ENCODE measurements at regions of chr13 and their contacts with region 1.

Region 1: GRCh38 chr13:24020375-24020830 is 123.1 kb upstream of the C1QTNF9B start:
- DNase-seq: peak; percentile 67
- H3K4me3 ChIP-seq: no peak overlapping the region
- H3K27ac ChIP-seq: no peak overlapping the region
- H3K4me1 ChIP-seq: no peaks in the 10 kb centered on the region
- H3K27me3 ChIP-seq: no peaks in the 10 kb centered on the region
- CTCF ChIP-seq: peak; percentile 62 to 74
- POLR2A ChIP-seq: no peak

Region 2: GRCh38 chr13:24008679-24009078 is 11.7 kb before region 1 on chr13:
- CTCF ChIA-PET with region 1: interaction called, 23 read pairs
- POLR2A ChIA-PET with region 1: no interaction called
- dilution Hi-C with region 1: no loop called
- intact Hi-C with region 1: no loop called
- DNase-seq: no peak
- H3K4me3 ChIP-seq: no peak overlapping the region
- H3K27ac ChIP-seq: no peak overlapping the region
- H3K4me1 ChIP-seq: no peaks in the 10 kb centered on the region
- H3K27me3 ChIP-seq: peaks cover 5 to 9% of the 10 kb centered on the region in 2 experiments
- CTCF ChIP-seq: no peak
- POLR2A ChIP-seq: no peak

Region 3: DNA sequence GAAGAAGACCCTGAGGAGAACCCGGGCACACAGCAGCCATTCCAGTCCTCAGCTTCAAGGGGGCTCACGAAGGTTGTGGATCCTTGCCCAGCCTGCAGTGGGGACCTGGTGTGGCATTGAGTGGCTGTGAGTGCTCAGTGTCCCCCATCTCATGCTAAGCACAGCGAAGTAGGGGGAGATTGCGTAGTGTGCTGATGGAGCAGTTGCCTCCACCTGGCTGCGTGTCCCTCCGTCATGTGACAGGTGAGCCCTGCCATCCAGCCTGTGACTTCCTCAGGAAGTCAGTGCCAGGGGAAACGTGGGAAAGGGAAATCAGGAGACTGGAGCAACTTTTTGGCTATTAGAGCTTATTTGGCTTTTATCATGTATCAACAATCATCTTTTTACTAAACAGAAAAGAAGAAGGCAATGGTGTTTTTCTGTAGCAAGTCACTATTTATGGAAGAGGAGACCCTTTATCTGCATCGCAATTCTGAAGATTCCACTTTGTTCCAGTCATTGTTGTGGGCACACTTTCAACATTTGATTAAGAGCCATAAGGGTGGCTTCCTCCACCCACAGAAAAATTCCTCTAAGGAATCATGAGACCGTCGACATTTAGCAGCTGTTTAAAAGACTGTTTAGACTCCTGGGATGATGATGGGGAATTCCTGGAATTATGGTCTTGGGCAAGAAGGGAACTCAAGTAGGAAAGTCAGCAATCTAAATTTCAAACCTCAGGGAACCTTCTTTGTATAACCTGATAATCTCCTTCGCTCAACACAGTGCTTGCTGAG is 13.3 kb after region 1 on chr13:
- CTCF ChIA-PET with region 1: interaction called, 21 read pairs
- POLR2A ChIA-PET with region 1: no interaction called
- dilution Hi-C with region 1: no loop called
- intact Hi-C with region 1: no loop called
- DNase-seq: no peak
- H3K4me3 ChIP-seq: no peak overlapping the region
- H3K27ac ChIP-seq: no peak overlapping the region
- H3K4me1 ChIP-seq: no peaks in the 10 kb centered on the region
- H3K27me3 ChIP-seq: peaks cover 11 to 14% of the 10 kb centered on the region in 2 experiments
- CTCF ChIP-seq: no peak
- POLR2A ChIP-seq: no peak

Region 4: DNA sequence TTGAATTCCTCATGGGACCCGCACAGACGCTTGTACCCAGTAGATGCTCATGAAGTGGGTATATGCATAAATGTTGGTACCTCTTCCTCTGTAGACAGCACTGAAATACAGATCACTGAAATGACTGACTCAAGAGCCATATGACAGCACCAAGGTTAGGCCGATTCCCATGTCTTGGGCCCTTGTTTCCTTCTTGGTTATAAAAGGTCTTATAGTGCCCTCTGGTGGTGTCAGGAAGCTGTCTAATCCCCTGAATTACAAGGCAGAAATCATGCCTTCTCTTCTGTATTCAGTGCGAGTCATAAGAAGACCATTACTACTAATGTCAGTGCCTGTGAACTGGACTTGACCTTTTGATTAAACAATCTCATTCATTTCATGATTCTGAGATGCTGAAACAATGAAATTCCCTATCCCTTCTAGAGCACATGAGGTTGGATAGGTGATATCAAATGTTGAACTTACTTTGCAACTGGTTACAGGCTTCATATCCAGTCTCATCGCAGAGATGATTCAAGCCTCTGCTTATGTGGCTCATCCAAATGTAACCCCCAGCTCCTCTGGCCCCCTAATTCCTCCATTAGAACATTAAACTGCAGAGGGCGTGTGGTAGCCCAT is 199.8 kb after region 1 on chr13:
- CTCF ChIA-PET with region 1: interaction called, 118 read pairs
- POLR2A ChIA-PET with region 1: no interaction called
- dilution Hi-C with region 1: no loop called
- intact Hi-C with region 1: loop called (anchors 1 kb)
- DNase-seq: peak; percentile 77
- H3K4me3 ChIP-seq: no peak overlapping the region
- H3K27ac ChIP-seq: no peak overlapping the region
- H3K4me1 ChIP-seq: peaks cover 10% of the 10 kb centered on the region
- H3K27me3 ChIP-seq: no peaks in the 10 kb centered on the region
- CTCF ChIP-seq: peak; percentile 60 to 62
- POLR2A ChIP-seq: no peak